ENCODE measurements at regions of chr1 and their contacts with region 1.

Region 1: DNA sequence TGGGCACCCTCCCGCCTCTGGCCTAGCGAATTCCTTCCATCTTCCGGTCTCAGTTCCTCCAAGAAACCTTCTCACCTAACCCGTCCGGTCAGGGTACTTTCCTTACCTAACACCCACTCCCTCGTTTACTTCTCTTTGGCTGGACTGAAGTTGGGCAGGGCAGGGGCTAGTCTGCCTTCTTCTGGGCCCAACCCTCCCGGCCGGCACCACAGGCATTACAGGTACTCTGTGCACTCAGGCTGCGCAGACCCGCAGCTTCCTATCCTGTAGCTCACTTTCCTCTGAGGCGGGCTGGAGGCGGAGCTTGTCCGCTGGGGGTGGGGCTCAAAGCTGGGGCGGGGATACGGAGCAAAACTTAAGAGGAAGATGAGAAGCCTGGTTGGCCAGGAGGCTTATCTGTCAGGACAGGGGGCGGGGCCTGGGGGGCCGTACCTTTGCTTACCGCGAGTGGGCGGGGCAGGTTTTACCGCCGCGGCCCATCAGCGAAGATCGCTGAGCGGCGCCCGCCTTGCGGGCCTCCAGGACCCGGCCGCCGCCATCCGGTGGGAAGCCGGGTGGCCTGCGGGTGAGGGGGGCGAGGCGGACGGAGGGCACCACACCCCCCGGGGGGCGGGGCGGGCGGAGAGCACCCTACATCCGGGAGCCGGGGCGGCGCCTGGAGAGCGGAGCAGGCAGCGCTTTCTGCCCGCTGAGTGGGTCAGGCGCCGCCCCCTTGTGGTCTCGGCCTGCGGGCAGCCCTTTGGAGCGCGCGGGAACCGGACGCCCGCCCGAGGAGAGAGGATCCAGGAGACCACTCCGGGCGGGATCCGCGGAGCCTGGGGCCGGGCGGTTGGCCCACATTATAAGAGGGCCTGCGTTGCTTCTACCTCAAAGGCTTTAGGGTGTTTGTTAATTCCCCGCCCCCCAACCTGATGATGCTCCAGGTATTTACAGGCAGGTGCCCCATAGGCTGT is 31.9 kb downstream of the ZNF648 start:
- H3K4me3 Mint-ChIP-seq: peak overlapping the region; percentile 86
- H3K27ac Mint-ChIP-seq: peak overlapping the region; percentile 78
- H3K4me1 Mint-ChIP-seq: peaks cover 10% of the 10 kb centered on the region
- H3K27me3 Mint-ChIP-seq: peaks cover 2% of the 10 kb centered on the region

Region 2: DNA sequence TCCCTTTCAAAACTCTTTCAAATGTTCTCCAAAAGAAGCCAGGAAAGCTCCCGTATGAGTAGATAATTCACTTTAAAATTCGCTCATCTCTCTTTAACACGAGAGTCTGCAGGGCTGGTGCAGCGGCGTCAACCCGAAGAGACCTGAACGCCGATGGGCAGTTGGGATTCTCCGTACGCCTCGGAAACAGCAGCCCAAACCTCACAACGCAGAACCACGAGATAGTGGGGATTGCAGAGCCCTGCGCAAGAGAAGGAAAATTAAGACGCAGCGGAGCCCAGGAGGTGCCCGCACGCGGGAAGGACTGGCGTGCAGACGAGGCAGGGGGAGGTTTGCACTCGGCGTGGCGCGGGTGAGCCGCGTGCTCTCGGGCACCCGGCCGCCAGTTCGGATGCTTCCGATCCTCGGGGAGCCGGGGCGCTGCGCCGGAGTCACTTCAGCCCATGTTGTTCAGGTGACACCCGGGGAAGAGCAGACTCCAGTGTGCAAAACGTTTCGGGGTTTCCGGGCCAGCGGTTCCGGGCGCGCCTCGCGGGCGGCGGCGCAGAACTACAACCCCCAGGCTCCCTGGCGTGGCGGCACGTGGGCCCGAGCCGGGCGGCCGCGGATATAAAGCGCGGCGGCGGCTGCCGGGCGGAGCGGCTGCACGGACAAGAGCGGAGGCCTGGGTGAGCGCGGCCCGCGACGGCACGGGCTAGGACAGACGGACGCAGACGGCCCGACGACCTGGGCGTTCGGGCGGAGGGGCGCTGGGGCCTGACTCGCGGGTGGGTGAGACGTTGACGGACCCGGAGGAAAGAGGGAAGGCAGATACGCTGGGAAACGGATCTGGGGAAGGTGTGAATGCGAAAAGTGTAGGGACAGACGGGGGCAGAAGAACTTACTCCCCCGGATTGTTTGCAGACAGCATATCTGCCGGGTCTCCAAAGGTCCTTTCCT is 759.8 kb after region 1 on chr1 and contains the start of gene NPL:
- intact Hi-C with region 1: loop called (anchors 5 kb)
- H3K4me3 Mint-ChIP-seq: peak within 1 kb of the TSS; percentile 98
- H3K27ac Mint-ChIP-seq: peak within 1 kb of the TSS; percentile 93
- H3K4me1 Mint-ChIP-seq: peaks cover 56% of the 10 kb centered on the region
- H3K27me3 Mint-ChIP-seq: peaks cover 10% of the 10 kb centered on the region